Heart left ventricle (tissue), 16 donors: ENCODE measurements at regions of chr12 and their contacts with region 1.

Region 1: DNA sequence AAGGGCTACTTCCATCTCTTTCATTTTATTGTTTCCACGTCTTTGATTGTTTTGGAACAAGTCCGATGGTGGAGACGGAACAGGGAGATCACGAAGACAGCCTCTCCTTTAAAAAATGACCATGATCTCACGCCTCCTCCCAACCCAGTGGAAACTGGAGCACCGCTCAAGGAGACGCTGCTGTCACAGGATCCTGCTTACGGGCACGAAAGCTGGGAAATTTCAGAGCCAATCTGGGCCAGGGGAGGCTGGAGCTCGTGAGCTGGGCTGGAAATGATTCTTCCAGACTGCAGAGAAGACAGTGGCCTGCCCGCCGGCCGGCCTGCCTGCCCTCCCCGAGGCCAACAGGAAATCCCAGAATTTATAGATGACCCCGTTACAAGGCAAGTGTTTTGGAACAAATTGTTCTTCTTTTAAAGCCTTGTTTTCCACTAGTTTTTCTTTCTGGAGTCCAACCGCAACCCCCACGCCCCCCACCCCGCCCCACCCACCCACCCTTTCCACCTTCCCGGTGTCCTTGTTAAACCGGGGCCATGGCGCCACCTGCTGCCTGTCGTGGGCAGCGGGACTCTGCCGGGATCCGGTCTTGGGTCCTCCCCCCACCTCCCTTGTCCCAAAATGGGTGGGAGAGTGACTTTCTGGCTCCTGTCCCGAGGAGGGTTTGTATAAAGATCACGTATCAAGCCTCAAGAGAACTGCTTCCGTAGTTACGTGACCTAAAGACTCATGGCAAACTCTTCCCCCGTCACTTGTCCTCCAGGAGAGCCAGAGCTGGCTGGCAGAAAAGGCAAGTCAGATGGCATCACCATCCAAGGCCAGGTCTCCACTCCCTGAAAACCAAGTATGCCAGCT is 40.3 kb downstream of the MAP1LC3B2 start:
- DNase-seq: peak; percentile 81 to 90 (median 83)
- ATAC-seq: peak; percentile 78 to 90 (median 89)
- H3K4me3 ChIP-seq: peak overlapping the region in 10 of 12 donors; percentile 23 to 55 (median 42)
- H3K27ac ChIP-seq: peak overlapping the region; percentile 64 to 89 (median 77)
- H3K4me1 ChIP-seq: peaks cover 0 to 42% (median 17%) of the 10 kb centered on the region in 12 donors
- H3K27me3 ChIP-seq: no peaks in the 10 kb centered on the region
- CTCF ChIP-seq: peak; percentile 47 to 84 (median 74)
- POLR2A ChIP-seq: no peak

Region 2: DNA sequence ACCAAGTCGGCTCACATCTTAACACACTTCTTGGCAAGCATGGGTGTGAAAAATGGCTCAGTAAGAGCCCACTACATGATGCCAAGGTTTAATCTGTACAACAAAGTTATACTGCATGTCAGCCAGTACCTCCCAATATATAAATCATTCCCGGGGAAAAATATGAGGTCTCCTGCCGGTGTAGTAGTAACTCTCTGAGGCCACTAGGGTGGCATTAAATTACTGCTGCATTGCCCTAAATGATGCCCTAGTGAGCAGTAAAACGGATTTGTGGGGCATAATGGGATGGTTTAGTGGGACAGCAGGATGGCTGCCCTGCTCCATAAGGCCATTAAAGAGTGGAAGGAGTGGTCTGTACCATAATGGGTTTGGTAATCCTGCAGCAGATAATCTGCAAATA is 589.7 kb before region 1 on chr12:
- intact Hi-C with region 1: loop called in 3 of 10 experiments (anchors 1 to 5 kb)
- DNase-seq: no peak
- ATAC-seq: no peak
- H3K4me3 ChIP-seq: no peak overlapping the region
- H3K27ac ChIP-seq: no peak overlapping the region
- H3K4me1 ChIP-seq: no peaks in the 10 kb centered on the region
- H3K27me3 ChIP-seq: no peaks in the 10 kb centered on the region
- CTCF ChIP-seq: peak in 6 of 12 donors; percentile 10 to 41 (median 18)
- POLR2A ChIP-seq: no peak

Region 3: DNA sequence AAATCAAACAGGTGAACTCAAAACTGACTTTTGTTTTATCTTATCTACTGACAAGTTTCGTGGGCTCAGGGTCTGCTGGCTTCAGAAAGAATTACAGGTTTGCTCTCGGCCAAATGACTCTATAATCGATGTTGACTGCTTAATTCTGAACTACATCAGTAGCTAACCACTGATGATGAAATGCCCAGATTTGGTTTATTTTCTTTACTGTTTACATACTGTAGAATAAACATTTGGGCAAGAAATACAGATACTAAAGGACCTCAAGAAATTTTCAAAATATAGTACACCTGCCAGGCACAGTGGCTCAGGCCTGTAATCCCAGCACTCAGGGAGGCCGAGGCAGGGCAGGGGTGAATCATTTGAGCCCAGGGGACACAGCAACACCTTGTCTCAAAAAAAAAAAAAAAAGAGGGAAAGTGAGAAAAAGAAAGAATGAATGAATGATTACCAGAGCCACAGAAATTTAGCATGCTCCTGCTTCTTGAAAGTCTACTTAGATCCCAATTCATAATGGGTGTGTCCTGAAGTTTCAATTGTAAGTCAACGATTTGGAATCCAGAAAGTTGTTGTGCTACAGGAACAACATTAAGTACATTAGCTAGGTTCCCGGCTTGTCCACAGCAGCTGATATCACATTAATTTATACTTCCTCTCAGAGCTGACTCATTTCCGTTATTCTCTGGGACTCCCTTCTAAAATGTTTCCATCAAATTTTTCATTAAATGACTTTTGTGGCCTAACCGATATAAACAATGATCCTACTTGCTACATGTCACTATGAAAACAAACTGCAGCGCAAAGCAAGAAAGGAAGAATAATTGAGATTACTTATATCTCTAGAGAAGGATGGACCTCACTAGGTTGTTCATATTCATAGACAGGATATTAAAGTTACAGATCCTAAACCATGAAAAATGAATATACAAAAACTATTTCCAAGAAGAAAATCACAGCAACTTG is 456.3 kb before region 1 on chr12:
- intact Hi-C with region 1: loop called in 5 of 10 experiments (anchors 5 to 10 kb)
- DNase-seq: no peak
- ATAC-seq: peak in 2 of 4 donors; percentile 27 to 29
- H3K4me3 ChIP-seq: no peak overlapping the region
- H3K27ac ChIP-seq: peak overlapping the region in 7 of 12 donors; percentile 1 to 60 (median 31)
- H3K4me1 ChIP-seq: peaks cover 4 to 79% (median 52%) of the 10 kb centered on the region in 12 donors
- H3K27me3 ChIP-seq: no peaks in the 10 kb centered on the region
- CTCF ChIP-seq: no peak
- POLR2A ChIP-seq: no peak

Region 4: GRCh38 chr12:116277393-116278278 is 321.9 kb before region 1 on chr12 and contains the start of gene MED13L:
- intact Hi-C with region 1: loop called (anchors 1 to 10 kb)
- DNase-seq: peak; percentile 90 to 96 (median 93)
- ATAC-seq: peak; percentile 88 to 97 (median 93)
- H3K4me3 ChIP-seq: peak within 1 kb of the TSS; percentile 71 to 95 (median 88)
- H3K27ac ChIP-seq: peak within 1 kb of the TSS; percentile 90 to 99 (median 95)
- H3K4me1 ChIP-seq: peaks cover 0 to 63% (median 29%) of the 10 kb centered on the region in 12 donors
- H3K27me3 ChIP-seq: no peaks in the 10 kb centered on the region
- CTCF ChIP-seq: peak in 10 of 12 donors; percentile 13 to 67 (median 51)
- POLR2A ChIP-seq: peak in 1 of 2 donors; percentile 38
- total RNA-seq, gene MED13L: 48.6 to 84.1 (median 68.7) TPM

Region 5: DNA sequence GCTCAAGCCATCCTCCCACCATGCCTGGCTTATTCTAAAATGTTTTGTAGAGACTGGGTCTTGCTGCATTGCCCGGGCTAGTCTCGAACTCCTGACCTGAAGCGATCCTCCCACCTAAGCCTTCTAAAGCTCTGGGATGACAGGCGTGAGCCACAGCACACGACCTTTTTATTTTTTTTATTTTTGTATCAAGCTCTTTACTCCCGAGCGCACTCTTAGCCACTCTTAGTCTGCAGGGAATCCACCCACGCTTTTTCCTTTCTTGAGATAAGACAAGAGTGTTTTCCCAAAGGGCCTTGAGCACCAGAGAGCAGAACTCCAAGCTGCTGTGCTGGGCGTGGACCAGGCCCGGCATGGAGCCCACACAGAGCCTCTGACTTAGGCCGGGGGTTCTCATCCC is 16.9 kb before region 1 on chr12:
- intact Hi-C with region 1: no loop called
- DNase-seq: peak; percentile 56 to 68 (median 65)
- ATAC-seq: peak; percentile 81 to 96 (median 91)
- H3K4me3 ChIP-seq: no peak overlapping the region
- H3K27ac ChIP-seq: peak overlapping the region in 1 of 12 donors; percentile 46
- H3K4me1 ChIP-seq: peaks cover 0 to 13% (median 8%) of the 10 kb centered on the region in 12 donors
- H3K27me3 ChIP-seq: no peaks in the 10 kb centered on the region
- CTCF ChIP-seq: no peak
- POLR2A ChIP-seq: no peak

Region 6: GRCh38 chr12:116677202-116677661 is 77.7 kb after region 1 on chr12:
- intact Hi-C with region 1: loop called in 3 of 10 experiments (anchors 5 to 10 kb)
- DNase-seq: no peak
- ATAC-seq: peak in 1 of 4 donors; percentile 3
- H3K4me3 ChIP-seq: no peak overlapping the region
- H3K27ac ChIP-seq: peak overlapping the region in 7 of 12 donors; percentile 9 to 66 (median 58)
- H3K4me1 ChIP-seq: peaks cover 0 to 46% (median 18%) of the 10 kb centered on the region in 12 donors
- H3K27me3 ChIP-seq: no peaks in the 10 kb centered on the region
- CTCF ChIP-seq: no peak
- POLR2A ChIP-seq: no peak

Region 7: DNA sequence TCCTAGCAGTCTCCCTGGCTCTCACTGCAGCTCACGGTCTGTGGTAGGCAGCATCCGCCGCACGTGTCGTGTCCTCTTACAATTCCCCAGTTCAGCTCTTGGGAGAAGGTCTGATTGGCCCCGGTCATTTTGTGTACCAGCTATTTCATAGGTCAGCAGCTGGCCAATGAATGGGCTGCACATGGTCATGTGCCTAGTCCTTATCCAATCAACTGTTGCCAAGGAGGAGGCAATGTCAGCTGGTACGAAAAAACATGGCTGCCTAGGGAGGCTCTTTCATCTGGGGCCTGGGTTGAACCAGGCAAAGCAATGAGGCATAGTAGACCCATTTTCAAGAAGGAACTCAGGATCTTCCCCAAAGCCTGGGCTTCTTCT is 184.7 kb after region 1 on chr12:
- intact Hi-C with region 1: no loop called
- DNase-seq: no peak
- ATAC-seq: no peak
- H3K4me3 ChIP-seq: no peak overlapping the region
- H3K27ac ChIP-seq: no peak overlapping the region
- H3K4me1 ChIP-seq: no peaks in the 10 kb centered on the region
- H3K27me3 ChIP-seq: no peaks in the 10 kb centered on the region
- CTCF ChIP-seq: no peak
- POLR2A ChIP-seq: no peak